CD14-positive monocyte (primary cell): ENCODE measurements at regions of chr12 and their contacts with region 1.

Region 1: GRCh38 chr12:642633-643474 is 20.4 kb downstream of the NINJ2 start:
- DNase-seq: peak; percentile 75 to 78 (median 76)
- H3K4me3 ChIP-seq: peak overlapping the region; percentile 58 to 76 (median 71)
- H3K4me3 Mint-ChIP-seq: peak overlapping the region; percentile 86 to 96
- H3K27ac ChIP-seq: peak overlapping the region; percentile 90 to 93
- H3K27ac Mint-ChIP-seq: peak overlapping the region; percentile 94 to 98 (median 96)
- H3K4me1 ChIP-seq: peaks cover 71 to 76% of the 10 kb centered on the region in 2 donors
- H3K4me1 Mint-ChIP-seq: peaks cover 71% of the 10 kb centered on the region
- H3K27me3 ChIP-seq: no peaks in the 10 kb centered on the region
- H3K27me3 Mint-ChIP-seq: no peaks in the 10 kb centered on the region
- CTCF ChIP-seq: peak; percentile 57

Region 2: DNA sequence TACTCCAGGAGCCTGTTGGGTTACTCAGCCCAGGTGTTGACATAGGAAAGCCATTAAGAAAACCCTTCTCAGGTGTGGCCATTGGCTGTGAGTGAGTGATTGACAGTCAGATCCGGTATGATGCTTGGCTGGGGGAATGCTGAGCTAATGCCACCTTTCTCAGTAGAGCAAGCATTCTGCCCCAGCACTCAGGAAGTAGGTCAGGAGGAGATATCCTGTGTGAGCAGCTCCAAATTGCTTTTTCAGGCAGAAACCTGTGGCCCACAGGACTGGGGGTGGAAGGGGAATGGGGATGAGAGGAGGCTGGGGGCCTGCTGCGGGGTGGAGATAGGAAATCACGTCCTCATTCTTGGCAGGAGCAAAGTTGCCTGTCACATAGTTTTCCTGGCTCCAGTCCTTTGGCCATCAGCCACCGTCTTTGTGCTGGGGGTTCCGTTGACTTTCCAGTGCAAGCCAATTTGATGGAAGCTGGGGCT is 35.3 kb before region 1 on chr12:
- intact Hi-C with region 1: loop called (anchors 2 to 5 kb)
- DNase-seq: no peak
- H3K4me3 ChIP-seq: no peak overlapping the region
- H3K4me3 Mint-ChIP-seq: no peak overlapping the region
- H3K27ac ChIP-seq: no peak overlapping the region
- H3K27ac Mint-ChIP-seq: peak overlapping the region in 5 of 7 donors; percentile 14 to 68 (median 55)
- H3K4me1 ChIP-seq: peaks cover 68 to 74% of the 10 kb centered on the region in 2 donors
- H3K4me1 Mint-ChIP-seq: peaks cover 74% of the 10 kb centered on the region
- H3K27me3 ChIP-seq: no peaks in the 10 kb centered on the region
- H3K27me3 Mint-ChIP-seq: peaks cover 0 to 4% (median 0%) of the 10 kb centered on the region in 3 donors
- CTCF ChIP-seq: no peak